Dorsolateral prefrontal cortex (tissue), 120 donors: ENCODE measurements at regions of chr11 and their contacts with region 1.

Region 1: DNA sequence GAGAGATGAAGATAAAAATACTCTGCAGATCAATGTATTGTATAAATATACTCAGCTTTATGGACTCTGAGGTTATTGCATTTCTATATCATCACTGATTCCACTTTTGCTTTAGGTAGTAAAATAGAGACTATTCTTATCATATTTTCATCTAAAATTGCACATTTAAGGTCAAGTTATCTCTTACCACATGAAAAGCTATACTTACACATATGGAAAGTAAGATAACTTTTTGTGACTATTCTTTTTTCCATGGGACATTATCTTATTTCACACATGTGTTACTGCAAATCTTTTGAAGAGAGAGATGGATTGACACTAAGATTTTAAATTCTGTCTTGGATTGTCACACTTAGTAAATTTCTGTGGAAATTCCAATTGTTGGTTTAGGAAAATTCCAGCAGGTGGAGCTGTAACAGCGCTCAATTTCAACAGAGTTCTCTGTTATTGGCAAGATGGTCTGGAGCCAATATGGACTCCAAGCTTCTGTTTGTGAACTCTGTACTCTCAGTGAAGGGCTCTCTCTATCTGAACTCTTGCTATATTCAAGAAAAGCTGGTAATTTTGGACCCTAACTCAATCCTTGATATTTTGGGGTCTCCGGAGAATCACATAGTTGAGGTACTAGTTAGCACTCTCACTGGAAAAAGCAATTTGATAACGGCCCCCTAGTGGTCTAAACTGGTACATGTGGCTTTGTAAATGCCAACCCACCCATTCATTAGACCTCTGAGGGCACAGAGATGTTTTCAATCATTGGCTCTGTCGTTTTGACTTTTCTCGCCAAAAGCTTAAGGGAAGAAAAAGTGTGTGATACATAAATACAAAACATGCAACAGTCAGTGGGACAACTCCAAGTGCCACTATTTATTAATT is 429.7 kb downstream of the ETS1 start:
- DNase-seq: peak in 1 of 10 donors; percentile 15
- H3K4me3 ChIP-seq: peak overlapping the region in 9 of 59 donors; percentile 4 to 31 (median 24)
- H3K27ac ChIP-seq: no peak overlapping the region
- H3K27me3 ChIP-seq: peaks cover 0 to 9% (median 0%) of the 10 kb centered on the region in 45 donors
- CTCF ChIP-seq: peak; percentile 72 to 98 (median 90)

Region 2: DNA sequence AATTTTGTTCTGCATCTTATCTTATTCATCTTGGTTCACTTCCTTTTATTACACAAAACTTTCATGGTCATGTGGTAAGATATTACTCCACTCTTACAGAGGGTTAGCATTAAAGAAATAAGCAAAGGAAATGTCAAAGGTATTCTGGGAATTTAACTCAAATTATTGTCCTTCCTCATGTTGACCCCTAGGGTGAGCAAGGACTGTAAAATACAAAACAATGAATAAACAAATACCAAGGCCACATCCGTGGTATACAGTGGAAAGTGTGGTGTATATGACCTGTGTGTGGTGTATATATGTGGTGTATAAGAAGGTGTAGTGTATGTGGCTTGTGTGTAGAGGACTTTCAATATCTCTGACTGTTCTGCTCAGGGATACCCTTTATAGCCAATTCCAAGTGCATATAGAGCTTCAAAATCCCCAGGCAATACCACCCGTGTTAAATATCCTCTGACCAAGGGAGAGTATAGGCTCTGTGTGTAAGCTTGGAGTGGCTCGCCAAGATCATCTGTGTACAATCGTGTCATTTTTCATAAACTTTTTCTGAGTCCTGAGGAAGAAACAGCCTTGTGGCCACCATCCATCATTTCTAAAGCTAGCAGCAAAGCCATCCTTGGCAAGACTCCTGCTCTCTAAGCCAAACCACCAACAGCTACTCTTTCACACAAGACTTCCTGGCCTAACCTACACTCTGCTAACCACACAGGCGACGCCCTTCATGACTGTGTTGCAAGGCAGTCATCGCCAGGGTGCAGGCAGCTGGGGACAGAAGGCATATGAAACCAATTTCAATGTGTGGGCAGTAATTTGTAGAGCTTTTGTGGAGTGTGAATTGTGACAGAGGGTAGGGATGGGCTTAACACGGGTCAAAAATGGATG is 118.3 kb before region 1 on chr11:
- intact Hi-C with region 1: loop called in 1 of 2 experiments (anchors 10 kb)
- DNase-seq: no peak
- H3K4me3 ChIP-seq: no peak overlapping the region
- H3K27ac ChIP-seq: no peak overlapping the region
- H3K27me3 ChIP-seq: peaks cover 0 to 31% (median 0%) of the 10 kb centered on the region in 45 donors
- CTCF ChIP-seq: peak in 1 of 56 donors; percentile 15